ENCODE measurements at regions of chr1 and their contacts with region 1.

Region 1: GRCh38 chr1:173195596-173196088 is 11.5 kb downstream of the TNFSF4 start:
- DNase-seq: no peak
- H3K4me3 ChIP-seq: no peak overlapping the region
- H3K27ac ChIP-seq: no peak overlapping the region
- H3K4me1 ChIP-seq: peaks cover 2 to 8% (median 5%) of the 10 kb centered on the region in 4 donors
- H3K27me3 ChIP-seq: no peaks in the 10 kb centered on the region
- CTCF ChIP-seq: no peak
- EP300 ChIP-seq: no peak
- POLR2A ChIP-seq: no peak

Region 2: DNA sequence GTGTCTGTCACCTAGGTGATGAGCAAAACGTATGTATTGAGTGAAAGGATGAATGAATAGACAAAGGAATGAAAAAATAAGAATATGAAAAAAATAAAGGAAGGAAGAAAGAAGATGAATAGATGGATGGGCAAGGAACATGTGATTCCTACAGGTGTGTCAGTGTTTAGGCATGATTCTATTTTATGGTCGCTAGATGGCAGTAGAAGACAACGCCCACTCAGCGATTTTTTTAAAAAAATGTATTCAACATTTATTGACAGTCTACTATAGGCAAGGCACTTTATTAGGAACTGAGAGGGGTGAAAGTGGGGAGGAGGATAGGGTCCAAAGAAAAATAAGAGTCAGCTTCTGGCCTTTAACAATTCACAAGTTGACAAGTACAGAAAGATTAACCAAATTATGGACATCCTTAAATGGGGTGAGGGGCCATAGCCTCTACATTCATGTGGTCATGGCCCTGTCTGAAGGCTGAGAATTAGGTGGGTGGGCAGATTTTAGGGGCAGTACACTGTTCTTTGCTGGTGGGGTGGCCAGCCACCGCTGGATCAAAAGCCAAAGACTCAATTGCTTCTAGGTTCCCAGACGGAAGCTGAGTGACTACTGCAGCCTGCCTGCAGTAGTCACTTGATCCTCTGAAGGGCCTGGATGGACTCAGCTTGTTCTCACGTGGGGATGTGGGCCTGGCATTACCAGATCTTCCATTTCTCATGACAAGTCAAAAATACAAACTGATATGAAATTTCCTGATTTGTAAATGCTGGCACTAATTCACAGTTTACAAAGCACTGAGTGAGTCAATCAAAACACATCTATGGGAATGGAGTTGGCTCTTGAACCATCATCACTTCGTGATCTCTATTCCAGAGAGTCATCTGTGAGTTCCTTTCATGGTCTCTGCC is 452.8 kb before region 1 on chr1:
- intact Hi-C with region 1: loop called (anchors 5 kb)
- DNase-seq: peak in 1 of 2 donors; percentile 61
- H3K4me3 ChIP-seq: no peak overlapping the region
- H3K27ac ChIP-seq: no peak overlapping the region
- H3K4me1 ChIP-seq: peaks cover 18 to 28% (median 24%) of the 10 kb centered on the region in 4 donors
- H3K27me3 ChIP-seq: peaks cover 0 to 6% (median 0%) of the 10 kb centered on the region in 3 donors
- CTCF ChIP-seq: peak in 5 of 7 experiments; percentile 13 to 73 (median 61)
- EP300 ChIP-seq: no peak
- POLR2A ChIP-seq: no peak

Region 3: DNA sequence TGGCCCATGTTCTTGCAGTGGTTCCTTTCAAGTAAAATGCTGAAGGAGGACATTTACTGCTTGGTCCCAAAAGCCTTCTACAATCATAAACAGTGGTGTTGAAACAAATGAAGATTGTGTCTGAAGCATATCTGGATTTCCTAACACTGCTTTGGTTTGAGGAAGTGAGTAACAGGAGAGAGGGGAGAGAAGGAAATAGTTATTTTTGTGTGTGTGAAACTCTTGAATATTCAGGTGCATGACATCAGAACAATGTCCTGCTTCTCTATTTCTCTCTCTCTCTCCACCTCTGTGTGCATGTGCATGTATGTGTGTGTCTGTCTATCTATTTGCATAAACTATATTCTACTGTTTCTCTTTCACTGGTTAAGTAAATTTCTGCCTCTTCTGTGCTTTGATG is 83.5 kb before region 1 on chr1:
- intact Hi-C with region 1: no loop called
- DNase-seq: peak in 1 of 2 donors; percentile 23
- H3K4me3 ChIP-seq: no peak overlapping the region
- H3K27ac ChIP-seq: no peak overlapping the region
- H3K4me1 ChIP-seq: no peaks in the 10 kb centered on the region
- H3K27me3 ChIP-seq: no peaks in the 10 kb centered on the region
- CTCF ChIP-seq: no peak
- EP300 ChIP-seq: no peak
- POLR2A ChIP-seq: no peak

Region 4: GRCh38 chr1:173149887-173150286 is 45.8 kb before region 1 on chr1:
- intact Hi-C with region 1: no loop called
- DNase-seq: no peak
- H3K4me3 ChIP-seq: no peak overlapping the region
- H3K27ac ChIP-seq: no peak overlapping the region
- H3K4me1 ChIP-seq: no peaks in the 10 kb centered on the region
- H3K27me3 ChIP-seq: no peaks in the 10 kb centered on the region
- CTCF ChIP-seq: no peak
- EP300 ChIP-seq: no peak
- POLR2A ChIP-seq: no peak